Endothelial cell of umbilical vein (primary cell): ENCODE measurements at regions of chr2 and their contacts with region 1.

Region 1: DNA sequence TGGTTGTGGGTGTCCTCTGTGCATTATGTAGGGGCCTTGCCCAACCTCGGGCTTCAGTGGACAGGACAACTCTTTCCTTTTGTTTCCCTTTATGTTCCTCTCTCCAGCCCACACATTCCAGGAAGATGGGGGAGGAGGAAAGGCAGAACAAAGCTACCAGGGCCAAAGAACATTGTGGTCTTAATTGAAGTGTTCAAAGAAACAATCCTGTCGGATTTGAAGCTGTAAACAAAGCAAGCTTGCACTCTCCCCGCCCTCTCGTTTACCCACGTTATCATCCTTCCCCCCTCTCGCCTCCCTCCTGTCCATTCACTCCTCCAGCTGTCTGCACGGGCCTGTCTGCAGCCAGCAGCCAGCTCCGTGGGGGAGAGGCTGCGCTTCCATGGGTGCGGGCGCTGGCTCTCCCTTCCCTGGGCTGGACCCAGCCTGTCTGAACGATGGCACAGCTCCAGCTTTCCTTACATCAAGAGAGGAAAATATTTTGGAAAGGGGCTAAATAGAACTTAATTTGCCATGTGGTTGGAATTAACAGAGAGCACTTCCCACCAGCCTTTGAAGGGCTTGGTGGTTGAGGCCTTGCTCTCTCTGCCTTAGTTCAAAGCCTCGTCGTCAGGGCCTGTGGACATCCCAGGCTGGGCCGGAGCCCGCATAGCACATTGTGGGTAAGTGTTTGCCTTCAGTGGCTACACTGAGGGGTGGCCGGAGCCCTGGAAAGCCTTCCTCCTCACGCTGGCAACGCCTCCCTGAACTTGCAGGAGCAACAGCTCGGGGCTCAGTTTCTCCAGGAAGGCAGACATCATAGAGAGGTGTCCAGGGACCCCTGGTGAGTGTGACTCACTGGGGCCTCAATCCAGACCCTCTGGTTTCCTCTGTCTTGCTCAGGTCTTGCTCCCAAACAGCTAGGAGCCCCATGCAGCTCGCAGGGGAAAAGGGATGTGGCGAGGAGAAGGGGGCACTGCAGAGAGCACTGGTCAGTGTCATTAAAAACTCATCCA is 60.6 kb upstream of the HS6ST1 start:
- DNase-seq: peak; percentile 48
- H3K4me3 ChIP-seq: no peak overlapping the region
- H3K27ac ChIP-seq: no peak overlapping the region
- H3K4me1 ChIP-seq: no peaks in the 10 kb centered on the region
- H3K27me3 ChIP-seq: peaks cover 0 to 3% of the 10 kb centered on the region in 2 experiments
- CTCF ChIP-seq: no peak
- POLR2A ChIP-seq: no peak

Region 2: DNA sequence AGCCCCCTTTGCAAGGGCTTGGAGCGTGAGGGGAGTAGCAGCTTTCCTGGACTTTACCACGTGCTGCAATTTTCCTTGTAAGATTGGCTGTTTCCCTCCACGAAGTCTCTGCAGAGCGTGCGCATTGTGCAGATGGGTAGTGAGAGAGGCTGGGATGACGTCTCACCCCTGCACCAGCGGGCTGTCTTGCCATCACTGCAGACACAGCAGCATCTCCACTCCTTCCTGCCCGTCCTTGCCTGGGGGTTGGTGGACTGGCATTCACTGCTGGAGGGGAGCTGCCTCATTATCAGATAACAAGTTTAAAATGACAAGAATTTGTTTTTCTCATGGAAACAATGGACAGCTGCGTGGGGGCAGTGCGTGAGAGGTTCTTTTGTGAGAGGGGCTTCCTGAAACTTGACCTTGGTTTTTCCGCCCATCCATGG is 15.4 kb before region 1 on chr2:
- CTCF ChIA-PET with region 1: no interaction called
- POLR2A ChIA-PET with region 1: interaction called, 3 read pairs
- dilution Hi-C with region 1: no loop called
- intact Hi-C with region 1: loop called (anchors 1 kb)
- DNase-seq: peak; percentile 74
- H3K4me3 ChIP-seq: no peak overlapping the region
- H3K27ac ChIP-seq: no peak overlapping the region
- H3K4me1 ChIP-seq: peaks cover 6% of the 10 kb centered on the region
- H3K27me3 ChIP-seq: no peaks in the 10 kb centered on the region
- CTCF ChIP-seq: no peak
- POLR2A ChIP-seq: no peak